HAP-1 (cell line): ENCODE measurements at regions of chr2 and their contacts with region 1.

Region 1: GRCh38 chr2:25131567-25132298 is 36.6 kb downstream of the POMC start:
- DNase-seq: no peak
- H3K4me3 ChIP-seq: no peak overlapping the region
- H3K4me1 ChIP-seq: peaks cover 2% of the 10 kb centered on the region; the same call in 1 of the 2 replicates
- H3K27me3 ChIP-seq: no peaks in the 10 kb centered on the region

Region 2: GRCh38 chr2:24315669-24316068 is 816.1 kb before region 1 on chr2:
- in situ Hi-C with region 1: no loop called
- DNase-seq: no peak
- H3K4me3 ChIP-seq: no peak overlapping the region
- H3K4me1 ChIP-seq: no peaks in the 10 kb centered on the region
- H3K27me3 ChIP-seq: no peaks in the 10 kb centered on the region

Region 3: GRCh38 chr2:24977631-24978030 is 154.1 kb before region 1 on chr2:
- in situ Hi-C with region 1: loop called (anchors 5 kb)
- DNase-seq: no peak
- H3K4me3 ChIP-seq: no peak overlapping the region
- H3K4me1 ChIP-seq: peaks cover 6% of the 10 kb centered on the region
- H3K27me3 ChIP-seq: no peaks in the 10 kb centered on the region

Region 4: GRCh38 chr2:25491966-25492532 is 360.3 kb after region 1 on chr2:
- in situ Hi-C with region 1: no loop called
- DNase-seq: peak in 1 of 2 experiments; percentile 73
- H3K4me3 ChIP-seq: no peak overlapping the region
- H3K4me1 ChIP-seq: peaks cover 13% of the 10 kb centered on the region
- H3K27me3 ChIP-seq: peaks cover 6% of the 10 kb centered on the region; the same call in 1 of the 2 replicates